Motor neuron (in vitro differentiated cells): ENCODE measurements at regions of chr10 and their contacts with region 1.

Region 1: DNA sequence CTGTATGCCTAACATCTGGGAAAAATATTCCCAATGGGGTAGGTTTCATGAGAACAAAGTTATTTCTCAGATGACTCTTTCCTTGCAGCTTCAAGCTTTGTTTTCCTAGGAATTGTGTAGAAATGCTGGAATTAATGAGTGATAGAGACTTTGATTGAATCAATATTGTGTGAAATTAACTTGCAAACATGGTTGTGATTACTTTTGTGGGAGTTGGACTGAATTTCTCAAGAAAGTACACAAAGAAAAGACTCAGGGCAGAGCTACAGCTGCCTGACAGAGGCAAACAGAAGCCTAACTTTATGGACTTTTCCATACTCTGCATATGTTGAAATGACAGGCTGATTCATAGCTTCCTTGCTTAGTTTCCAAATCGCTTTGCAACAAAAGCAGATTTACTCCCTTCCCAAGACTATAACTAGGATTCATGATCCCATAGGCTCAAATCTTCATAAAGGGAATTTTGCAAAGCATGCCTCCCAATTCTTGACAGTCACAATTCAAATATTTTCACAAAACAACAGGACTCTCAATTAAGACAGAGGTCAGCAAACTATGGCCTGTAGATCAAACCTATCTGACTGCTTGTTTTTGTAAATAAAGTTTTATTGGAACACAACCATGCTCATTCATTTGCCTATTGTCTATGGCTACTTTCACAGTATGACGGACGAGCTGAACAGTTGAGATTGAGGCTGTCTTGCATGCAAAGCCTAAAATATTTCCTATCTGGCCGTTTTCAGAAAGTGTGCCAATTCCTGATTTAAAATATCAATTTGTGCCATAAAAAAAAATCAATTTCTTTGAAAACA is 27.6 kb downstream of the NRP1 start:
- ATAC-seq: peak in 3 of 8 experiments; percentile 76 to 81 (median 77)
- H3K4me3 ChIP-seq: no peak overlapping the region
- H3K27ac ChIP-seq: no peak overlapping the region
- H3K4me1 ChIP-seq: peaks cover 26 to 36% of the 10 kb centered on the region in 2 donors

Region 2: DNA sequence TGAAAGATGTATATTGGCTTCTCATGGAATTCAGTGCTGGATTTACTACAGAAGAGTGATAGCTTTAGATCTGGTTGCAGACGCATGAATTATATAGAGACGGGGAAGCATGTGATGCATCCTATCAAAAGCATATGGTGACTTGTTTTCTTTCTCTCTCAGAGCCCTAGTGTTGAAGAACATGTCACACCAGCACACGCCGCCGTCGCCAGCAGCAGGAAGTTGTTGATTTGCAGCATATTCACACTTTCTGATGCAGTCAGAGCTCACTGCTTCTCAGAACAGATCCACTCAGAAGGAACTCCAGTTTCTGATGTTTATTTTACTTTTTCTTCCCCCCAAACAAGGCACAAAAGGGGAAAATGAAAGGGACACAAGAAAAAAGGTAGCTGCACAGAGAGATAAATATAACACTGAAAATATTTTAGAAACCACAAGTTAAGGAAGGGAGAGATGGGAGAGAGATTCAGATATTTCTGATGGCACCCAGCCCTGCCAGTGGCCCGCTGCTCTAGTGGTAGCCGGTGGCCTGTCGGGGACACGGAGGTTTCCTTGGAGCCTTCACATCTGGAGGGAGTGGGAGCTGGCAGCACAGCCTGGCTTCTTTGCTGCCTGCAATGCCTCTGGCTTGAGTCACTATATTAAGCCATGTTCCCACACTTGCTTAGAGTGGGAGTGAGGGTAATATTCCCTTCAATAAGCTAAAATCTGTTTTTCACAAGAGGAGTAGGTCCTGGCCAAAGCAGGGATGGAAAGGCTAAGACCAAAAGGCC is 95.6 kb before region 1 on chr10:
- in situ Hi-C with region 1: loop called in 1 of 9 experiments (anchors 25 kb)
- ATAC-seq: peak in 3 of 8 experiments; percentile 30 to 90 (median 73)
- H3K4me3 ChIP-seq: no peak overlapping the region
- H3K27ac ChIP-seq: no peak overlapping the region
- H3K4me1 ChIP-seq: no peaks in the 10 kb centered on the region

Region 3: DNA sequence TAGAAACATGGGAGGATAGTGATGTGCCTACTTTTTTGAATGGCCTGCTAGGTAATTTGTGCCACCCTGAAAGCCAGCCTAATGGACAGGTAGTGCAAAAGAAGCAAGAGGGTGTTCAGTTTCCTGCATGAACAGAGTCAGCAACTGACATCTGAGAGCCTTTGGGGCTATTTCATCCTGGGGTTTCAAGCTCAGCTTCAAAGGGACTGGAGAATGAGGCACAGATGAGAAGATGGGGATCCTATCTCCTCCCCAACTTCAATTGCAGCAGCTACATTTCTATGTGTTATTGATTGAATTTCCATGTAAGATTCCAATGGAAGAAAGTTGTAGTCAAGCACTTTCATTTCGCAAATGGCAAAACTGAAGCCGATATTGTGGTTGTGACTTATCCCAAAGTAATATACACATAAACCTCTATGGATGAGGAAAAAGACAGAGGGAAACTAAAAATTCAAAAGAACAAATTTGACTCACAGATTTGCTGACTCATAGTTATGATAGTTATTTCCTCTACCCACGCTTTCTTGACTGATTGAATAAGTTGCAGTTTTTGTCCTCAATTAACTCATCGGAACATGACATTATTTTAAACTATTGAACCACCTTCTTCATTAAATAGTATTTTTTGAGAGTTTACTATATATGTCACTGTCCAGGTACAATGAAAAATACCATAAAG is 70.2 kb after region 1 on chr10:
- in situ Hi-C with region 1: no loop called
- ATAC-seq: peak in 2 of 8 experiments; percentile 29 to 31
- H3K4me3 ChIP-seq: no peak overlapping the region
- H3K27ac ChIP-seq: no peak overlapping the region
- H3K4me1 ChIP-seq: peaks cover 10 to 16% of the 10 kb centered on the region in 2 donors